OCI-LY7 (cell line): ENCODE measurements at regions of chr4 and their contacts with region 1.

Region 1: GRCh38 chr4:171256223-171256622 is 557.0 kb upstream of the GALNTL6 start:
- DNase-seq: no peak
- H3K4me3 ChIP-seq: no peak overlapping the region
- H3K27ac ChIP-seq: no peak overlapping the region
- H3K4me1 ChIP-seq: no peaks in the 10 kb centered on the region
- CTCF ChIP-seq: no peak

Region 2: DNA sequence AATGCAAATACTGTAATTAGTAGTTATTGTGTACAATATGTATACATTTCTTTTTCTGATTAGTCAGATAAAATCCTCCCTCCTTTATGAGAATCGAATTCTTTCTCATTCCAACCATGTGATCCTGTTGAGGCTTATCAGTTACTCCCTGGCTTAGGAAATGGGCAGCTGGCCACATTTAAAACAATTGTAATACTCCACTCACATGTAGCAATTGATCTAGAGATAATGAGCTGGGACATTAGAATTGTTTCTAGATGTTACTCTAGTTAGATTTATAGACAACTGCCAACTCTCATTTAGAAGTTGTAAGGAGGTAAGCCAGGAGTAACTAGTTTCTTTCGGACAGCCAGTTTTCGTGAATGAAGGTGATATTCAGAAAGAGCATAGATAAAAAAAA is 307.1 kb before region 1 on chr4:
- CTCF ChIA-PET with region 1: no interaction called
- POLR2A ChIA-PET with region 1: no interaction called
- intact Hi-C with region 1: no loop called
- DNase-seq: no peak
- H3K4me3 ChIP-seq: no peak overlapping the region
- H3K27ac ChIP-seq: no peak overlapping the region
- H3K4me1 ChIP-seq: no peaks in the 10 kb centered on the region
- CTCF ChIP-seq: no peak

Region 3: GRCh38 chr4:171169396-171169795 is 86.8 kb before region 1 on chr4:
- CTCF ChIA-PET with region 1: interaction called, 11 read pairs
- POLR2A ChIA-PET with region 1: no interaction called
- intact Hi-C with region 1: no loop called
- DNase-seq: no peak
- H3K4me3 ChIP-seq: no peak overlapping the region
- H3K27ac ChIP-seq: no peak overlapping the region
- H3K4me1 ChIP-seq: no peaks in the 10 kb centered on the region
- CTCF ChIP-seq: no peak

Region 4: DNA sequence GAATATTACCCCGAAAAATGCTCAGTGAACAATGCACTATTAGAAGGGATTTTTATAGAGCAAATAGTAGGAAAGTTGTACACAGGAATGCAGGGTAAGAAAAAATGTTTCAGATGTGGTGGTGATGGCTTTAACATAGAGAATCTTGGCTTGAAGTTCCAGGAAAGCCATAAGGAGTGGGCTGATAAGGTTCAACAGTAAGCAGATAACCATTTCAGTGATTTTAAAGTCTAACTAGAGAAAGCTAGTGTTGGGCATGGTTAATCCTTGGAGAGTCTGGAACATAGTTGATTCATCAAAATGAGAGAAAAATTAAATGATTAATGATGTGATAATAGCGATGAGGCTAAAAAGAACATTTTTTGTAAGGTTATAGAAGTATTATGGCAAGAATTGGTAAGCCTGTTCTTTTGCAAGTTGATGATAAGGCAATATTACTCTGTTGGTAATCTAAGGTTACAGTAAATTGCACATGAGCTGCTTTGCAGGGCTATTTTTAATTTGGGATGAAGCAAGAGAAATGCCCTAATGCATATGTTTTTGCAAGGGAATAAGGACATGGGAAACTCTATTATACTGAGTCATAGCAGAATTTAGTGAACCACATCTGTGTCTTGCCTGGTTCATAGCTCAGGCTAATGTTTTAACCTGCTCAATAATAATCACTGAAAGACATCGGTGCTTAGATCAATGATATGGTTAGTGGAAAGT is 601.2 kb after region 1 on chr4:
- CTCF ChIA-PET with region 1: no interaction called
- POLR2A ChIA-PET with region 1: no interaction called
- intact Hi-C with region 1: no loop called
- DNase-seq: no peak
- H3K4me3 ChIP-seq: no peak overlapping the region
- H3K27ac ChIP-seq: no peak overlapping the region
- H3K4me1 ChIP-seq: no peaks in the 10 kb centered on the region
- CTCF ChIP-seq: no peak